HEK293 (cell line): ENCODE measurements at regions of chr11 and their contacts with region 1.

Region 1: DNA sequence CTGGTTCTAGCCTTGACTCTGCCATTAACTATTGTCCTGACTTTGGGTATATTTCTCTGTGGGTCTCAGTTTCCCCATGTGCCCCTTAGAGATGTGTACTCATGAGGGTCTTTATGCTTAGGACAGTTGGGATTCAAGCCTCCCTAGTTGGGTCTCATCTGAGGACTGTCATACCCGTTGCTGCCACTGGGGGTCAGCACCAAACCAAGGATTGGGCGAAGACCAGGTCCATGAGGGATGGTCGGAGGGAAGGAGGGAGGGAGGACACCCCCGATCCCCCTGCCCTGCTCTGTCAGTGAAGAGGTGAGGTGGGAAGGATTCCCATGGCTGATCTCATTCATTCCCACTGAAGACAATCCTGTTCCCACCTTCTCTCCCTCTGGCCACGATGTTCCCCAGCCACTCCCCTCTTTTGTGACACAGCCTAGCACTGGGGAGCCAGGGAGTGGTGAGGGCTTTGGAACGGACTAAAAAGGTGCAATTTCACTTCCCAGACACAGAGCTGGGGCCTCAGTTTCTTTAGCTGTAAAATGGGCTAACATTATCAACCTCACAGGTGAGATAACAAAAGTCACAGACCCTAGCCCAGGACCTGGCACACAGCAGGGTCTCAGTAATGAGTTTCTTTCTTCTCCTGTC is 12.4 kb upstream of the KLHL35 start:
- H3K4me3 ChIP-seq: no peak overlapping the region
- H3K27ac ChIP-seq: no peak overlapping the region
- H3K4me1 ChIP-seq: no peaks in the 10 kb centered on the region
- CTCF ChIP-seq: peak; percentile 70

Region 2: DNA sequence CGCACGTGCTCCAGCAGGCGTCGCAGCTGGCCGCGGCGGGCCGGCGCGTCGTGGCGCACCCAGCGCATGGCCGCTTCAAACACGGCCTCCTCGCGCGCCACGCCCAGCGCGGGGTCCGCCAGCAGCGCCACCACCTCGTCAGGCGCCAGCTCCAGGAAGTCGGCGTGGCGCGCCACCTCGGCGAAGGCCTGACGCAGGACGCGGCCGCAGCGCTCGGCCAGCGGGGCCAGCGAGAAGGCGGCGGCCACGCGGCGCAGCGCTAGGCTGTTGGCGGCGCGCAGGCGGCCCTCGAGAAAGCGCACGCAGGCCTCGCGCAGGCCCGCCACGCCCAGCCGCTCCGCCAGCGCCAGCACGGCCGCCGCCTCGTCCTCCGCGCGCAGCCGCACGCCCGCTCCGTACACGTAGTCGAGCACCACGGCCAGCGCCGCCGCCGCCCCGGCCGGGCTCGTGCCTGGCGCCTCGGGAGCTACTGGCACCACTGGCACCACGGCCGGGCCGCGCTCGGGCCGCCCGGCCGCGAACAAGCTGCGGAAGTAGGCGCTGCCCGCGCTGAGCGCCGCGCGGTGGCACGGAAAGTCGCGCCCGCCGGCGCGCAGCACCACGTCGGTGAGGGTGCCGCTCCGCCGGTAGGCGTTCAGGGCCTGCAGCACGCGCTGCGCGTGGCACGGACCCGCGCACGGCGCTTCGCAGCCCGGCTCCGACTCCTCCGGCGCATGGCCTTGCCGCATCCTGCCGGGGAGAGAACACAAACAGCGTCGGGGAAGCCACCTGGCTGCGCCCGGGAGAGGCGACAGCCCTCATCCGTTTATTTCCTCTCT is 15.3 kb before region 1 on chr11:
- CTCF ChIA-PET with region 1: interaction called, 20 read pairs
- POLR2A ChIA-PET with region 1: no interaction called
- H3K4me3 ChIP-seq: no peak overlapping the region
- H3K27ac ChIP-seq: no peak overlapping the region
- H3K4me1 ChIP-seq: no peaks in the 10 kb centered on the region
- CTCF ChIP-seq: no peak

Region 3: DNA sequence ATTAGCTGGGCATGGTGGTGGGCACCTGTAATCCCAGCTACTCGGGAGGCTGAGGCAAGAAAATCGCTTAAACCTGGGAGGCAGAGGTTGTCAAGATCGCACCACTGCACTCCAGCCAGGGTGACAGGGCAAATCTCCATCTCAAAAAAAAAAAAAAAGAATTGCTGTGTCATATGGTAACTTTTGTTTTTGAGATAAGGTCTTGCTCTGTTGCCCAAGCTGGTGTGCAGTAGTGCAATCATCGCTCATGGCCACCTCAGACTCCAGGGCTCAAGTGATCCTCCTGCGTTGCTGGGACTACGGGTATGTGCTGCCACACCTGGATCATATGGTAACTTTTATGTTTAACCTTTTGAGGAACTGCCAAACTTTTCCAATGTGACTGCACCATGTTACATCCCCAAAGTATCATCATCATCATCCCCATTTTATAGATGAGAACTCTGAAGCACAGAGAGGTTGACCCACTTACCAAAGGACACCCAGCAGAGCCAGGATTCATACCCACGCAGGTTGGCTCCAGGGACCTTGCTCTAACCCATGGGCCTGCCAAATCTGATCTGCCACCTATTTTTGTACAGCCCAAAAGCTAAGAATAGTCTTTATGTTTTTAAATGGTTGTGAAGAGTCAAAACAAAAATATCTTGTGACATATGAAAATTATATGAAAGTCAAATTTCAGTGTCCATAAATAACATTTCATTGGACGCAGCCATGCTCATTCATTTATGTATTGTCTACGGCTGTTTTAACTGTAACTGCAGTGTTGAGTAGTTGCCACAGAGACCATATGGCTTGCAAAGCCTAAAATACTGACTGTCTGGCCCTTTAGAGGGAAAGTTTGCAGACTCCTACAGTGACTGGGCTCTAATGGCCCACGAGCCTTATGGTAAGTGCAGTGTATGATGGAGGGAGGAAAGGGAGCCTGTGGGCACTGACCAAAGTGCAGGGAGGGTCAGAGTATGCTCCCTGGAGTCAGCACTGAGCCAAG is 35.0 kb after region 1 on chr11:
- CTCF ChIA-PET with region 1: interaction called, 11 read pairs
- POLR2A ChIA-PET with region 1: no interaction called
- H3K4me3 ChIP-seq: no peak overlapping the region
- H3K27ac ChIP-seq: no peak overlapping the region
- H3K4me1 ChIP-seq: no peaks in the 10 kb centered on the region
- CTCF ChIP-seq: no peak

Region 4: GRCh38 chr11:75525596-75526541 is 80.4 kb after region 1 on chr11 and contains the start of gene GDPD5:
- CTCF ChIA-PET with region 1: interaction called, 264 read pairs
- POLR2A ChIA-PET with region 1: no interaction called
- H3K4me3 ChIP-seq: peak within 1 kb of the TSS; percentile 64
- H3K27ac ChIP-seq: peak within 1 kb of the TSS; percentile 32; the same call in 1 of the 2 replicates
- H3K4me1 ChIP-seq: no peaks in the 10 kb centered on the region
- CTCF ChIP-seq: no peak